ENCODE measurements at regions of chr16 and their contacts with region 1.

Region 1: DNA sequence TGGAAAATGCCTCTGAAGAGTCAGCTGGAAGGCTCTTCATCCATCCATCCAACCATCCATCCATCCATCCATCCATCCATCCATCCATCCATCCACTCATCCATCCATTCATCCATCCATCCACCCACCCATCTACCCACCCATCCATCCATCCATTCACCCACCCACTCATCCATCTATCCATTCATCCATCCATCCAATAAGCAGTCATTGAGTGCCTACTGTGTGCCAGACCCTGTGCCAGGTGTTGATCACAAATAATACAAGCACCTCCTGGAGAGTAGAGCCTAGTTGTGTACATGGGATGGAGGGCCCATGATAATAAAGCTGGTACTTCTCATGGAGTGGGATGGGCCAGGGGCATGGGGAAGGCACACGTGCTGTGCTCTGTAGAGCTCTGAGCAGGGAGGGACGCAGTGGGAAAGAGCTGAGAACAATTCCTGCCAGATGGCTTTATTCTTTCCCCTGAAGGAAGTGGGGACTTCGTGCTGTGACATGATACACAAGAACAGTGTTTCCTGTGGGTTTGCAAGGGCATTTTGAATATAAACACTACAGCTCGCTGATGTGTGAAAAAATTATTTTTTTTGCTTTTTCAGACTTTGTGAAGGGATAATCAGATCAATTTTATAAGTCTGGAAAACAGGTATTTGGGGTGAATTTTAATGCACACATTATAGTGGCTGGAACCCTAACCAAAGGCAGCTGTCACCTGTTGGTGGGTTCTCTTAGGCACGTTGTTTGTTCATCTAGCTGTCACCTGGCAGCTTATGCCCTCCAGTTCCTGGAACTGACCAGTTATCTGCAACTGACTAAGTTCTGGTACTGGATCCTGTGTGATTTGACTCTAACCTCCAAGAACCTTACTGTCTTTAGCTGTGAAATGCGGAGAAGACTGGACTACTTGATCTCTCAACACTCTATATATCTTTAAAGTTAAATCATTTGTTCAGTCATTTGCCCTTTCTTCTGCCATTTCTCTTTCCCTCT is 61.3 kb downstream of the PRKCB start:
- DNase-seq: no peak
- H3K4me3 ChIP-seq: no peak overlapping the region
- H3K27ac ChIP-seq: no peak overlapping the region
- H3K4me1 ChIP-seq: peaks cover 0 to 10% (median 6%) of the 10 kb centered on the region in 4 experiments; a peak in 6 of 7 replicates
- H3K27me3 ChIP-seq: no peaks in the 10 kb centered on the region
- CTCF ChIP-seq: no peak
- EP300 ChIP-seq: no peak
- POLR2A ChIP-seq: no peak
- RAD21 ChIP-seq: no peak

Region 2: DNA sequence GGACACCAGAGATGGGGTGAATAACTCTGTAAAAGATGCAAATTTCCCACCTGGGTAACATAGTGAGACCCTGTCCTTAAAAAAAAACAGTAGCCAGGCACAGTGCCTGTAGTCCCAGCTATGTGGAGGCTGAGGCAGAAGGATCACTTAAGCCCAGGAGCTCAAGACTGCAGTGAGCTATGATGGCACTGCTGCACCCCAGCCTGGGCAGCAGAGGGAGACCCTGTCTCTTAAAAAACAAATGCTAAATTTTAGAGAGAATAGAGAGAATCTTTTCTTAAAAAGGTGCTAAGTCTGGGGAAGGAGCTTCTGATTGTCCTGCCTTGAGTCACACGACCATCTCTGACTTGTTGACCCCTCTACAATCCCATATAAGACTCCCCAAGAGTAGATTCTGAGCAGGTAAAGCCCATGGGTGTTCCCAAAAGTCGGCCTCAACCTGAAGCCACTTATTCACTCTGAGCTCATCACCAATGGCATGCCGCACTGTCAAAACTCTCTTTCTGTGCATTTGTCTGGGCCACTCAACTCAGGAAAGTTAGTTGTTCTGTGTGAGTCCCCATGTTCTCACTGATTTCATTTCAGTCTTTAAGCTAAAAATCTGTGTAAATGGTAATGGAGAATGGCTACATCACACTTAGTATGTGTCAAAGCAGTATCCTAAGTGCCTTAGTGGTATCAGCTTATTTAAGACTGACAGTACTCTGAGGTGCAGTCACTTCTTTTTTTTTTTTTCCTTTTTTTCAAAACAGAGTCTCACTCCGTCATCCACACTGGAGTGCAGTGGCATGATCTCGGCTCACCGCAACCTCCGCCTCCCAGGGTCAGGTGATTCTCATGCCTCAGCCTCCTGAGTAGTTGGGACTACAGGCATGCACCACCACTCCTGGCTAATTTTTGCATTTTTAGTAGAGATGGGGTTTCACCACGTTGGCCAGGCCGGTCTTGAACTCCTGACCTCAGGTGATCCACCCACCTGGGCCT is 19.7 kb before region 1 on chr16:
- CTCF ChIA-PET with region 1: interaction called, 11 read pairs
- POLR2A ChIA-PET with region 1: no interaction called
- DNase-seq: no peak
- H3K4me3 ChIP-seq: no peak overlapping the region
- H3K27ac ChIP-seq: no peak overlapping the region
- H3K4me1 ChIP-seq: no peaks in the 10 kb centered on the region
- H3K27me3 ChIP-seq: no peaks in the 10 kb centered on the region
- CTCF ChIP-seq: peak; percentile 32 to 47 (median 33); a peak in 3 of 4 replicates
- EP300 ChIP-seq: no peak
- POLR2A ChIP-seq: no peak
- RAD21 ChIP-seq: peak; percentile 55 to 67